Natural killer cell (primary cell): ENCODE measurements at regions of chr5 and their contacts with region 1.

Region 1: GRCh38 chr5:65925601-65926275 is 637 bp upstream of the ERBIN start:
- DNase-seq: peak; percentile 81 to 93
- ATAC-seq: peak; percentile 67 to 83 (median 77)
- H3K4me3 ChIP-seq: peak overlapping the region; percentile 68
- H3K4me3 Mint-ChIP-seq: peak overlapping the region; percentile 90
- H3K27ac ChIP-seq: peak overlapping the region; percentile 98
- H3K27ac Mint-ChIP-seq: peak overlapping the region; percentile 89 to 96
- H3K4me1 ChIP-seq: peaks cover 19% of the 10 kb centered on the region
- H3K4me1 Mint-ChIP-seq: peaks cover 40 to 66% of the 10 kb centered on the region in 2 donors
- H3K27me3 ChIP-seq: no peaks in the 10 kb centered on the region
- H3K27me3 Mint-ChIP-seq: no peaks in the 10 kb centered on the region
- CTCF ChIP-seq: no peak

Region 2: GRCh38 chr5:64900618-64901017 is 1025.1 kb before region 1 on chr5:
- intact Hi-C with region 1: no loop called
- DNase-seq: no peak
- ATAC-seq: no peak
- H3K4me3 ChIP-seq: no peak overlapping the region
- H3K4me3 Mint-ChIP-seq: no peak overlapping the region
- H3K27ac ChIP-seq: no peak overlapping the region
- H3K27ac Mint-ChIP-seq: no peak overlapping the region
- H3K4me1 ChIP-seq: no peaks in the 10 kb centered on the region
- H3K4me1 Mint-ChIP-seq: no peaks in the 10 kb centered on the region
- H3K27me3 ChIP-seq: no peaks in the 10 kb centered on the region
- H3K27me3 Mint-ChIP-seq: no peaks in the 10 kb centered on the region
- CTCF ChIP-seq: no peak

Region 3: DNA sequence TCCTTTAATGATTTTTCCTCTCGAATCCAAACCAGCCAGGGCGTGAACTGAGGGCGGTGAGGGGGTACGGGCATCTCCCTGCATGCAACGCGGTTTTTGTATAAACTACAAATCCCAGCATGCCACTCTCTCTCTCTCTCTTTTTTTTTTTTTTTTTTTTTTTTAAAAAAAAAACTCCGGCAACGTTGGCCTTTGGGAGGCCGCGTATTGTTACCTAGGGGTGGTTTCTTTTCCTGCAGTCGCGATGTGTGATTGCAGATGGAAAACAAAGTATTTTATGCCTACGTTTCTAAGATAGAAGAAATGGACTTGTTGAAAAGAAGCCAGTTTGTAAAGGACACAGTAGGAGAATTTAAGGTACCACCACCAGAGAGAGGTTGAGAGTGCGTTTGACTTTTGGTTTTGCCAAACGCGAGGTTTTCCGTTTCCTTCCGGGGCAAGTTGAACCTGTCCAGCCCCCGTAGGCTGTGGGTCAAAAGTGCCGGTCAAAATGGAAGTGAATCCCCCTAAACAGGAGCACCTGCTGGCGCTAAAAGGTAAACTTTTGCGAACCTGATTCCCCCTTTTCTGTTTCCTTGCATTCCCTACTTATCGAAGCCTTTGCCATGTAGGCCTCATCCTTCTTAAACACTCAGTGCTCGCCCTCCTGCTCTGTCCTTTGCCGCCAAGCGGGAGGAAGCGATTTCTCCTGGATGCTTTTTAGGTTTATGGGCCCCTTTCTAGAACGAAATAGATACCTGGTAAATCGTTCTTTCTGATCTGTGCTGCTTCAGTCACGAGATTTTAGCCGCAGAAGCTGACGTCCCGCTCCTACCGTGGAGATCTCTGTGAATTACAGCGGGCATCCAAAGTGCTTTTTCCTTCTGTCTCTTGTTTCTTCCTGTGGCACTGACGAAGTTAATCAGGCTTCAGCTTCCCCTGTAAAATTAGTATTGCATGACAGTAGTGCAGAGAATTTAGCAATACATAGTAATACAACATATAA is 300.9 kb before region 1 on chr5 and contains the starts of genes SHLD3 and TRAPPC13:
- intact Hi-C with region 1: loop called (anchors 2 kb)
- DNase-seq: peak; percentile 77 to 95
- ATAC-seq: peak; percentile 75 to 89 (median 76)
- H3K4me3 ChIP-seq: peak within 1 kb of the TSS; percentile 60
- H3K4me3 Mint-ChIP-seq: peak within 1 kb of the TSS; percentile 94
- H3K27ac ChIP-seq: peak within 1 kb of the TSS; percentile 73
- H3K27ac Mint-ChIP-seq: peak within 1 kb of the TSS; percentile 96 to 99
- H3K4me1 ChIP-seq: peaks cover 7% of the 10 kb centered on the region
- H3K4me1 Mint-ChIP-seq: peaks cover 34 to 35% of the 10 kb centered on the region in 2 donors
- H3K27me3 ChIP-seq: no peaks in the 10 kb centered on the region
- H3K27me3 Mint-ChIP-seq: no peaks in the 10 kb centered on the region
- CTCF ChIP-seq: peak; percentile 13
- total RNA-seq, gene SHLD3: 11.0 to 16.7 (median 12.7) TPM
- total RNA-seq, gene TRAPPC13: 20.9 to 27.5 (median 25.6) TPM

Region 4: DNA sequence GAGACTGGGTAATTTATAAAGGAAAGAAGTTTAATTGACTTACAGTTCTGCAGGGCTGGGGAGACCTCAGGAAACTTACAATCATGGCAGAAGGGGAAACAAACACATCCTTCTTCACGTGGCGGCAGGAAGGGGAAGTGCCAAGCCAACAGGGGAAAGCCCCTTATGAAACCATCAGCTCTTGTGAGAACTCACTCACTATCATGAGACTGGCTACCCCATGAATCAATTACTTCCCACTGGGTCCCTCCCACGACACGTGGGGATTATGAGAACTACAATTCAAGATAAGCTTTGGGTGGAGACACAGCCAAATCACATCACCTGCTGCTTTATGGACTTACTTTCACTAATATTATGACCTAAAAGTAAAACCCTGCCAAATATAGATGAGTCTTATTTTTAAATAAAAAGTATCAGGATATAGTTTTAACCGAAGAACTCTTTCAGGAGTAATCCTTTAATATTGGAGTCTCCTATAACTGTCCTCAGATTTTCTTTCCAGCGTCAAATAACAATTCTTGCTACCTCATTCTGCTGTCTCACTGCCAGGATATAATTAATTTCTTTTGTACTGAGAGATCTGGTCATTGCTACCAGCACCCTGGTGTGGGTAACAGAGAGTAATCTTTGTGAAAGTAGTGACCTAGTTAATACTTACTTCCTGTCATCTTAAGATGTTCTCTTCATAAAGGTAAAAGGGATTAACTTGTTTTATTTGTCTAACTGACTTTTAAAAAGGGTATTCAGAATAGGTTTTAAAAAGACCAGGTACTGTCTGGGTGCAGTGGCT is 135.2 kb before region 1 on chr5:
- intact Hi-C with region 1: loop called (anchors 1 kb)
- DNase-seq: peak; percentile 30 to 50
- ATAC-seq: peak; percentile 86 to 91 (median 88)
- H3K4me3 ChIP-seq: no peak overlapping the region
- H3K4me3 Mint-ChIP-seq: peak overlapping the region; percentile 59
- H3K27ac ChIP-seq: peak overlapping the region; percentile 16
- H3K27ac Mint-ChIP-seq: peak overlapping the region; percentile 85 to 93
- H3K4me1 ChIP-seq: peaks cover 11% of the 10 kb centered on the region
- H3K4me1 Mint-ChIP-seq: peaks cover 18 to 19% of the 10 kb centered on the region in 2 donors
- H3K27me3 ChIP-seq: no peaks in the 10 kb centered on the region
- H3K27me3 Mint-ChIP-seq: no peaks in the 10 kb centered on the region
- CTCF ChIP-seq: no peak

Region 5: GRCh38 chr5:65801352-65801783 is 124.4 kb before region 1 on chr5:
- intact Hi-C with region 1: no loop called
- DNase-seq: no peak
- ATAC-seq: no peak
- H3K4me3 ChIP-seq: no peak overlapping the region
- H3K4me3 Mint-ChIP-seq: no peak overlapping the region
- H3K27ac ChIP-seq: no peak overlapping the region
- H3K27ac Mint-ChIP-seq: no peak overlapping the region
- H3K4me1 ChIP-seq: peaks cover 4% of the 10 kb centered on the region
- H3K4me1 Mint-ChIP-seq: peaks cover 6 to 10% of the 10 kb centered on the region in 2 donors
- H3K27me3 ChIP-seq: no peaks in the 10 kb centered on the region
- H3K27me3 Mint-ChIP-seq: no peaks in the 10 kb centered on the region
- CTCF ChIP-seq: no peak

Region 6: DNA sequence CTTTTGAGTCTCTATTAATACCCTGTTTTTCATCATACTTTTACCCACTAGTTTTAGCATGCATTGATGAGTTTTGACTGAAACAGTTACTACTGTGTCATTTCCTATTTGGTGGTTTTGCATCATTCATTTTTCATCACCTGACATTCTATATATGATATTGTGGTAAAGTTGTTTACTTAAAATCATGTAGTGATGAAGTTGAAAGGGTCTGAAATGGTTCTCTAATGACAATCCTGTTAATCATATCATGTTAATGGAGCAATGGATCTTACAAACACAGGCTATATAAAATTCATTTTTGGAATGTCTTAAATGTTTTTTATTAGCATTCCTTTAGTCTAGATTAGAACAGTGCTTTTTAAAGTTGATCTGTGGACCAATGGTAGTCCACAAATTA is 84.7 kb after region 1 on chr5:
- intact Hi-C with region 1: loop called (anchors 1 kb)
- DNase-seq: peak in 1 of 2 donors; percentile 38
- ATAC-seq: peak; percentile 77 to 81 (median 81)
- H3K4me3 ChIP-seq: no peak overlapping the region
- H3K4me3 Mint-ChIP-seq: peak overlapping the region; percentile 32
- H3K27ac ChIP-seq: peak overlapping the region; percentile 30
- H3K27ac Mint-ChIP-seq: peak overlapping the region; percentile 81 to 88
- H3K4me1 ChIP-seq: no peaks in the 10 kb centered on the region
- H3K4me1 Mint-ChIP-seq: peaks cover 46 to 55% of the 10 kb centered on the region in 2 donors
- H3K27me3 ChIP-seq: no peaks in the 10 kb centered on the region
- H3K27me3 Mint-ChIP-seq: no peaks in the 10 kb centered on the region
- CTCF ChIP-seq: no peak

Region 7: DNA sequence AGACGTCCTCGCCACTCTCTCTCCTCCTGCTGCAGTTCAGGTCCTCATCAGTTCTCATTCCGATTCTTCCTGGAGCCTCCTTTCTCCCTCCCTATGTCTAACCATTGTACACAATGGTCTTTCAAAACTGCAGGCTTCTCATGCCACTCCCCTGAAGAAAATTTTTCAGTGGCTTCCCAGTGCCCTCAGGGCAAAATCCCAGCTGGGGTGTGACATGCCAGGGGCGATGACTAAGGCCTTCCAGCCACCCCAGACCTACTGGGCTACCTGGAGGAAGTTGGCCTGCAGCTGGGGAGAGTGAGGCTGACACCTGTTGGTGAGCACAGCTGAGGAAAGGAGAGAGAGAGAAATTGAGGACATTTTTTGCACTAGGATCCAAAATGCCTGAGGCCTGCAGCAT is 283.6 kb after region 1 on chr5:
- intact Hi-C with region 1: no loop called
- DNase-seq: no peak
- ATAC-seq: no peak
- H3K4me3 ChIP-seq: no peak overlapping the region
- H3K4me3 Mint-ChIP-seq: no peak overlapping the region
- H3K27ac ChIP-seq: no peak overlapping the region
- H3K27ac Mint-ChIP-seq: no peak overlapping the region
- H3K4me1 ChIP-seq: no peaks in the 10 kb centered on the region
- H3K4me1 Mint-ChIP-seq: no peaks in the 10 kb centered on the region
- H3K27me3 ChIP-seq: no peaks in the 10 kb centered on the region
- H3K27me3 Mint-ChIP-seq: no peaks in the 10 kb centered on the region
- CTCF ChIP-seq: no peak

Region 8: DNA sequence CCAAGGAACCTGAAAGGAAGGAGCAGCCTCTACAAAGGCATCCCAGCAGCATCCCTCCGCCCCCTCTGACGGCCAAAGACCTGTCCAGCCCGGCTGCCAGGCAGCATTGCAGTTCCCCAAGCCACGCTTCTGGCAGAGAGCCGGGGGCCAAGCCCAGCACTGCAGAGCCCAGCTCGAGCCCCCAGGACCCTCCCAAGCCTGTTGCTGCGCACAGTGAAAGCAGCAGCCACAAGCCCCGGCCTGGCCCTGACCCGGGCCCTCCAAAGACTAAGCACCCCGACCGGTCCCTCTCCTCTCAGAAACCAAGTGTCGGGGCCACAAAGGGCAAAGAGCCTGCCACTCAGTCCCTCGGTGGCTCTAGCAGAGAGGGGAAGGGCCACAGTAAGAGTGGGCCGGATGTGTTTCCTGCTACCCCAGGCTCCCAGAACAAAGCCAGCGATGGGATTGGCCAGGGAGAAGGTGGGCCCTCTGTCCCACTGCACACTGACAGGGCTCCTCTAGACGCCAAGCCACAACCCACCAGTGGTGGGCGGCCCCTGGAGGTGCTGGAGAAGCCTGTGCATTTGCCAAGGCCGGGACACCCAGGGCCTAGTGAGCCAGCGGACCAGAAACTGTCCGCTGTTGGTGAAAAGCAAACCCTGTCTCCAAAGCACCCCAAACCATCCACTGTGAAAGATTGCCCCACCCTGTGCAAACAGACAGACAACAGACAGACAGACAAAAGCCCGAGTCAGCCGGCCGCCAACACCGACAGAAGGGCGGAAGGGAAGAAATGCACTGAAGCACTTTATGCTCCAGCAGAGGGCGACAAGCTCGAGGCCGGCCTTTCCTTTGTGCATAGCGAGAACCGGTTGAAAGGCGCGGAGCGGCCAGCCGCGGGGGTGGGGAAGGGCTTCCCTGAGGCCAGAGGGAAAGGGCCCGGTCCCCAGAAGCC is 1240.1 kb after region 1 on chr5:
- intact Hi-C with region 1: loop called (anchors 5 kb)
- DNase-seq: peak; percentile 75 to 89
- ATAC-seq: peak; percentile 80 to 91 (median 83)
- H3K4me3 ChIP-seq: peak overlapping the region; percentile 58
- H3K4me3 Mint-ChIP-seq: peak overlapping the region; percentile 90
- H3K27ac ChIP-seq: peak overlapping the region; percentile 97
- H3K27ac Mint-ChIP-seq: peak overlapping the region; percentile 92 to 97
- H3K4me1 ChIP-seq: peaks cover 36% of the 10 kb centered on the region
- H3K4me1 Mint-ChIP-seq: peaks cover 50 to 60% of the 10 kb centered on the region in 2 donors
- H3K27me3 ChIP-seq: no peaks in the 10 kb centered on the region
- H3K27me3 Mint-ChIP-seq: no peaks in the 10 kb centered on the region
- CTCF ChIP-seq: peak; percentile 73